GM18951 (cell line): ENCODE measurements at regions of chr3 and their contacts with region 1.

Region 1: GRCh38 chr3:196186651-196187573 is 24.3 kb downstream of the ZDHHC19 start:
- POLR2A ChIP-seq: peak; percentile 45

Region 2: GRCh38 chr3:196079682-196080081 is 107.2 kb before region 1 on chr3:
- in situ Hi-C with region 1: loop called (anchors 5 kb)
- POLR2A ChIP-seq: no peak